ENCODE measurements at regions of chr3 and their contacts with region 1.

Region 1: GRCh38 chr3:100893590-100893989 is 99.6 kb downstream of the ABI3BP start:
- DNase-seq: no peak
- H3K4me3 ChIP-seq: no peak overlapping the region
- H3K27ac ChIP-seq: no peak overlapping the region
- H3K27me3 ChIP-seq: no peaks in the 10 kb centered on the region
- CTCF ChIP-seq: peak; percentile 88

Region 2: GRCh38 chr3:100537622-100538338 is 355.8 kb before region 1 on chr3:
- CTCF ChIA-PET with region 1: no interaction called
- POLR2A ChIA-PET with region 1: no interaction called
- DNase-seq: no peak
- H3K4me3 ChIP-seq: no peak overlapping the region
- H3K27ac ChIP-seq: no peak overlapping the region
- H3K27me3 ChIP-seq: no peaks in the 10 kb centered on the region
- CTCF ChIP-seq: no peak

Region 3: DNA sequence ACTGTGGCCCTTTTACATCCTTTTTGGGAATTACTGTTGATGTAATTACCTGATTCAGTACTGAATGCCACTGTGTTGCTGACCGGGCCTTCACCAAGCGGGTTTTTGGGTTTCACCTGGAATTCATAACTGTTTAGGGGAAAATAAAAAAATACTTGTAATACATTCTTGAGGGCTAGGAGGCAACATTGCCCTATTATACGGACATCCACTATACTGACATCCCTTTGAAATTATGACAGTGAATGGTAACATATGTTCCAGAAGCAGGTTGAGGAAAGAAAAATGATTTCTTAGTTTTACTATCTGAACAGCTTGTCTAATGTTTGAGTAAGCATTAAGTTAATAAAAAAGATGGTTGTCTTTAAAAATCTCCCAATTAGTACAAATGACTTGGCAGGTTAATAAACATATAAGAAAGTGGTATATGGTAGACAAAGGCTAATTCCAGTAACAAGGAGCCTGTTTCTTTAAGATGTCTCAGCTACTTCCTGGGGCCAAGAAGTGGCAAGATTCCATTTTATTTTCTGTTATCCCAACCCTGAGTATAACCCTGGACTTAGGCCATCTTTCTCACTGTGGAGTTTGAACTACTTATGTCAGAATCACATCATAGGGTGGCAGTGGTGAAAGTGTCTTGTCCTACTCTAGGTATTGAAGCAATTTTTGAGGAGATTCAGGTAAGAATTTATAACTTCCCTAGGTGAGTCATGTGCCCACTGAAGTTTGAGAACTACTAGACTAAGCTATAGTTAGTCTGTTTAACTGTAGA is 138.8 kb before region 1 on chr3:
- CTCF ChIA-PET with region 1: interaction called, 13 read pairs
- POLR2A ChIA-PET with region 1: no interaction called
- DNase-seq: no peak
- H3K4me3 ChIP-seq: no peak overlapping the region
- H3K27ac ChIP-seq: no peak overlapping the region
- H3K27me3 ChIP-seq: no peaks in the 10 kb centered on the region
- CTCF ChIP-seq: no peak

Region 4: GRCh38 chr3:100777276-100777675 is 116.3 kb before region 1 on chr3:
- CTCF ChIA-PET with region 1: interaction called, 10 read pairs
- POLR2A ChIA-PET with region 1: no interaction called
- DNase-seq: no peak
- H3K4me3 ChIP-seq: no peak overlapping the region
- H3K27ac ChIP-seq: no peak overlapping the region
- H3K27me3 ChIP-seq: no peaks in the 10 kb centered on the region
- CTCF ChIP-seq: no peak

Region 5: DNA sequence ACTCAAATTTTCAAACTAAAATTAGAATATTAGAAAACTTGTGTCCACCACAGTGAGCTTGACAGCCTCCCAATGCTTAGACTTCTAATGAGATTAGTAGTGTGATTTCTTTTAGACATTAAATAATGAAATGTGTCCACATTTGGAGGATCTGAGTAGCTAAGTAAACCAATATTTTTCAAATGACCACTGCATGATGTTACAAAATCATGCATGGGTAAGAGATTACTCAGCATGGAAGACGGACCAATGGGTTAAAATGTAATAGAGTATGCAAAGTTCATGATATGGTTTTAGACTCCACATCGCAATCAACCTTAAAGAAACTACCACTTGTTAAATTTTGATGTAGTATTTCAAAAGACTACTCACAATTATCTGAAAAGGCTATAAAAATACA is 296.2 kb after region 1 on chr3:
- CTCF ChIA-PET with region 1: interaction called, 12 read pairs
- POLR2A ChIA-PET with region 1: no interaction called
- DNase-seq: peak; percentile 16
- H3K4me3 ChIP-seq: no peak overlapping the region
- H3K27ac ChIP-seq: no peak overlapping the region
- H3K27me3 ChIP-seq: no peaks in the 10 kb centered on the region
- CTCF ChIP-seq: no peak